ENCODE measurements at regions of chr6 and their contacts with region 1.

Region 1: GRCh38 chr6:44133003-44133931 is 5.9 kb downstream of the TMEM63B start:
- DNase-seq: no peak
- H3K4me3 ChIP-seq: peak overlapping the region in 1 of 4 experiments; percentile 30; a peak in 1 of 8 replicates
- H3K27ac ChIP-seq: no peak overlapping the region
- H3K4me1 ChIP-seq: peaks cover 8 to 20% (median 15%) of the 10 kb centered on the region in 4 experiments
- H3K27me3 ChIP-seq: no peaks in the 10 kb centered on the region
- CTCF ChIP-seq: 0 out of 4 replicates have a peak, but pooled peaks of 1 of the 3 experiments have one; percentile 10
- EP300 ChIP-seq: no peak
- POLR2A ChIP-seq: no peak
- RAD21 ChIP-seq: 0 out of 4 replicates have a peak, but pooled peaks of 1 of the 2 experiments have one; percentile 12

Region 2: DNA sequence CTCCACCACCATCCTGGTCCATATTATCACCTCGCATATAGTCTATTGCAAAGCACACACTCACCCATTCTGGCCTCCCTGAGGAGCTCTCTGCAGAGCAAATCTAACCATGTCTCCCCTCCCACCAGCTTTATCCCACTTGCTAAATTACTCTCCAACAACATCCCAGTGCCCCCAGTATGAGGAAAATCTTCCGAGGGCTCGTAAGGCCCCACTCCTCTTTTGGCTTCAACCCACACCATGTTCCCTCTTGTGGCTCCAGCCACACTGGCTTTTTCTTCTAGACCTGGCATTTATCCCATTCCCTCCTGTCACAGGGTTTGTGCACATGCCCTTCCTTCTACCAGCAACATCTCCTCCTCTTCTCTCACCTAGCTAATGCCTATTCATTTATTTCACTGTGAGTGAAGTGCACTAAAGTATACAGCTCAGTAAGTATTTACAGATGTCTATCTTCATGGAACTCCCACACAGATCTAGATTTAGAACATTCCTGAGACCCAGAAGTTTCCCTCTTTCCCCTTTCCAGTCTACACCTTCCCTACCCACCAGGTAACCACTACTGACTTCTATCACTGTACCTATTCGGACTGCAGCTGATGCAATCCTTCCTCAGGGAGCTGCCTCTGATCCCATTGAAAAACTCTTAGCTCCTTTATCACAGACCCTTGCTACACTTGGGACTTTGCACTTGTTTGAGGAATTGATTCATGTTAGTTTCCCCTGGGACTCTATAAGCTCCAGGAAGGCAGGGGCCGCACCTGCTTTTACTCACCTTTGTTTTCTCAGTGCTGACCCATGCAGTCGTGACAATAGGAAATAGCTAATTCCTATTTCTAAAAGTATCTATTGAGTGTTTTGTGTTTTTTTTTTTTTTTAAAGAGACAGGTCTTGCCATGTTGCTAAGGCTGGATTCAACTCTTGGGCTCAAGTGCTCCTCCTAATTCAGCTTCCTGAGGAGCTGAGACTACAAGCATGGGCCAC is 21.5 kb before region 1 on chr6:
- CTCF ChIA-PET with region 1: interaction called, 12 read pairs
- POLR2A ChIA-PET with region 1: interaction called, 5 read pairs
- DNase-seq: no peak
- H3K4me3 ChIP-seq: no peak overlapping the region
- H3K27ac ChIP-seq: no peak overlapping the region
- H3K4me1 ChIP-seq: no peaks in the 10 kb centered on the region
- H3K27me3 ChIP-seq: no peaks in the 10 kb centered on the region
- CTCF ChIP-seq: no peak
- EP300 ChIP-seq: no peak
- POLR2A ChIP-seq: no peak
- RAD21 ChIP-seq: no peak

Region 3: GRCh38 chr6:44151348-44152108 is 18.3 kb after region 1 on chr6:
- CTCF ChIA-PET with region 1: interaction called, 28 read pairs
- POLR2A ChIA-PET with region 1: interaction called, 6 read pairs
- DNase-seq: peak; percentile 61 to 99
- H3K4me3 ChIP-seq: no peak overlapping the region
- H3K27ac ChIP-seq: no peak overlapping the region
- H3K4me1 ChIP-seq: peaks cover 0 to 10% (median 3%) of the 10 kb centered on the region in 4 experiments; a peak in 5 of 7 replicates
- H3K27me3 ChIP-seq: no peaks in the 10 kb centered on the region
- CTCF ChIP-seq: peak in 2 of 3 experiments; percentile 99 to 100; a peak in 3 of 4 replicates
- EP300 ChIP-seq: no peak
- POLR2A ChIP-seq: no peak
- RAD21 ChIP-seq: peak; percentile 71 to 82

Measured in H1 (cell line).